GM12878 (cell line): ENCODE measurements at regions of chr6 and their contacts with region 1.

Region 1: GRCh38 chr6:63649847-63650265 is 14.3 kb downstream of the PHF3 start:
- DNase-seq: no peak
- ATAC-seq: 0 out of 3 replicates have a peak, but pooled peaks have one; percentile 18
- H3K4me3 ChIP-seq: no peak overlapping the region
- H3K27ac ChIP-seq: no peak overlapping the region
- H3K4me1 ChIP-seq: no peaks in the 10 kb centered on the region
- H3K27me3 ChIP-seq: no peaks in the 10 kb centered on the region
- CTCF ChIP-seq: no peak
- EP300 ChIP-seq: no peak
- POLR2A ChIP-seq: no peak
- RAD21 ChIP-seq: no peak

Region 2: GRCh38 chr6:63509652-63510352 is 140.1 kb before region 1 on chr6:
- CTCF ChIA-PET with region 1: no interaction called
- POLR2A ChIA-PET with region 1: no interaction called
- RAD21 ChIA-PET with region 1: no interaction called
- SMC1A ChIA-PET with region 1: no interaction called
- in situ Hi-C with region 1: no loop called
- intact Hi-C with region 1: no loop called
- DNase-seq: no peak
- ATAC-seq: peak; percentile 82
- H3K4me3 ChIP-seq: no peak overlapping the region
- H3K27ac ChIP-seq: no peak overlapping the region
- H3K4me1 ChIP-seq: peaks cover 25% of the 10 kb centered on the region
- H3K27me3 ChIP-seq: no peaks in the 10 kb centered on the region
- CTCF ChIP-seq: no peak
- EP300 ChIP-seq: no peak
- POLR2A ChIP-seq: no peak
- RAD21 ChIP-seq: no peak

Region 3: GRCh38 chr6:63635588-63636517 is 14.0 kb before region 1 on chr6 and contains the start of gene PHF3:
- CTCF ChIA-PET with region 1: interaction called, 6 read pairs
- POLR2A ChIA-PET with region 1: interaction called, 4 read pairs
- RAD21 ChIA-PET with region 1: interaction called, 3 read pairs
- SMC1A ChIA-PET with region 1: interaction called, 6 read pairs
- in situ Hi-C with region 1: no loop called
- intact Hi-C with region 1: loop called (anchors 2 kb)
- DNase-seq: peak; percentile 56
- ATAC-seq: peak; percentile 88
- H3K4me3 ChIP-seq: peak within 1 kb of the TSS; percentile 78
- H3K27ac ChIP-seq: peak within 1 kb of the TSS; percentile 93
- H3K4me1 ChIP-seq: no peaks in the 10 kb centered on the region
- H3K27me3 ChIP-seq: no peaks in the 10 kb centered on the region
- CTCF ChIP-seq: peak in 1 of 3 experiments; percentile 9; a peak in 1 of 6 replicates
- EP300 ChIP-seq: no peak
- POLR2A ChIP-seq: peak; percentile 85
- RAD21 ChIP-seq: no peak
- polyA plus RNA-seq, gene PHF3: 8.3 to 9.5 TPM